Activated CD8-positive, alpha-beta T cell treated with anti-CD3 and anti-CD28 coated beads, Interleukin-2, amount 10 ng/mL, durations not matched to agents 7 days and 5 days (primary cell): ENCODE measurements at regions of chr15 and their contacts with region 1.

Region 1: GRCh38 chr15:90482124-90483011 is 47.4 kb upstream of the CRTC3 start:
- DNase-seq: peak; percentile 59
- ATAC-seq: no peak
- H3K4me3 Mint-ChIP-seq: no peak overlapping the region
- H3K27ac Mint-ChIP-seq: peak overlapping the region; percentile 22
- H3K4me1 Mint-ChIP-seq: peaks cover 38% of the 10 kb centered on the region
- H3K27me3 Mint-ChIP-seq: no peaks in the 10 kb centered on the region

Region 2: GRCh38 chr15:90300988-90301706 is 181.2 kb before region 1 on chr15:
- CTCF ChIA-PET with region 1: interaction called, 27 read pairs
- POLR2A ChIA-PET with region 1: no interaction called
- DNase-seq: peak; percentile 70
- ATAC-seq: peak; percentile 76
- H3K4me3 Mint-ChIP-seq: no peak overlapping the region
- H3K27ac Mint-ChIP-seq: no peak overlapping the region
- H3K4me1 Mint-ChIP-seq: peaks cover 25% of the 10 kb centered on the region
- H3K27me3 Mint-ChIP-seq: peaks cover 5% of the 10 kb centered on the region

Region 3: GRCh38 chr15:90325726-90326125 is 156.6 kb before region 1 on chr15:
- CTCF ChIA-PET with region 1: interaction called, 131 read pairs
- POLR2A ChIA-PET with region 1: no interaction called
- DNase-seq: no peak
- ATAC-seq: no peak
- H3K4me3 Mint-ChIP-seq: no peak overlapping the region
- H3K27ac Mint-ChIP-seq: no peak overlapping the region
- H3K4me1 Mint-ChIP-seq: no peaks in the 10 kb centered on the region
- H3K27me3 Mint-ChIP-seq: no peaks in the 10 kb centered on the region

Region 4: GRCh38 chr15:90471769-90472168 is 10.6 kb before region 1 on chr15:
- CTCF ChIA-PET with region 1: interaction called, 32 read pairs
- POLR2A ChIA-PET with region 1: no interaction called
- DNase-seq: no peak
- ATAC-seq: no peak
- H3K4me3 Mint-ChIP-seq: no peak overlapping the region
- H3K27ac Mint-ChIP-seq: no peak overlapping the region
- H3K4me1 Mint-ChIP-seq: peaks cover 24% of the 10 kb centered on the region
- H3K27me3 Mint-ChIP-seq: no peaks in the 10 kb centered on the region

Region 5: DNA sequence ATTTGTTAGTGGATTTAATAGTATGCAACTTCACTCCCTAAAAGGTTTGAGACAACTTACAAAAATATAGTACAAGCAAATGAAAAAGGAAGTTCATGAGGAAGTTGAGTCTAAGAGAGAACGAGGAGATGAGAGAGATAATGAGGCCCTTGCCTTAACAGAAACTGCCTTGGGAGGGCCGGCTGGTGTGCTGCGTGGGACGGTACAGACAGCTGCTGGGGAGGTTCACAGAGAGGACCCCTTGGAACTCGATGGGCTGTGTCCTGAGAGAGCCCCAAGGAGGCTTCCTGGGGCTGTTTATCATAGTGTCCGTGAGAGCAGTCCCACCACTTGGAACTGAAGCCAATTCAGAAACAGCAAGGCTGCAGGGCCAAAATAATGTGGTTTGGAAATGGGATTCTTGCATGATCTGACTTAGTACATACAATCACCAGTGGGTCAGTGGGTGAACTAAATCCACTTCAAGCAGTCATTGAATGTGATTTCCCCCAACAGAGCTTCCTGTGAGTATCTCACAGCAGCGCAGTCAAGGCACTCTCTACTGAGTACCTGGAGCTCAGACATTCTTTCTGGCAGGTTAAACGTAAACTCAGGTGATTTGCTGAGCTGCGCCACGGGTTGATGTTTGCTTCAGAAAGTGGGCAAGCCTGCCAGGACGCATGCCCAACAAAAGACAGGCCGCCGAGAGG is 138.2 kb after region 1 on chr15:
- CTCF ChIA-PET with region 1: interaction called, 15 read pairs
- POLR2A ChIA-PET with region 1: no interaction called
- DNase-seq: peak; percentile 46
- ATAC-seq: peak; percentile 82
- H3K4me3 Mint-ChIP-seq: peak overlapping the region; percentile 27
- H3K27ac Mint-ChIP-seq: peak overlapping the region; percentile 85
- H3K4me1 Mint-ChIP-seq: peaks cover 22% of the 10 kb centered on the region
- H3K27me3 Mint-ChIP-seq: no peaks in the 10 kb centered on the region